GM10248 (cell line): ENCODE measurements at regions of chr1 and their contacts with region 1.

Region 1: GRCh38 chr1:39238476-39238875 is 34.0 kb downstream of the MACF1 start:
- DNase-seq: no peak
- CTCF ChIP-seq: no peak

Region 2: GRCh38 chr1:39190096-39190495 is 48.4 kb before region 1 on chr1:
- CTCF ChIA-PET with region 1: interaction called, 27 read pairs
- POLR2A ChIA-PET with region 1: no interaction called
- DNase-seq: no peak
- CTCF ChIP-seq: no peak

Region 3: DNA sequence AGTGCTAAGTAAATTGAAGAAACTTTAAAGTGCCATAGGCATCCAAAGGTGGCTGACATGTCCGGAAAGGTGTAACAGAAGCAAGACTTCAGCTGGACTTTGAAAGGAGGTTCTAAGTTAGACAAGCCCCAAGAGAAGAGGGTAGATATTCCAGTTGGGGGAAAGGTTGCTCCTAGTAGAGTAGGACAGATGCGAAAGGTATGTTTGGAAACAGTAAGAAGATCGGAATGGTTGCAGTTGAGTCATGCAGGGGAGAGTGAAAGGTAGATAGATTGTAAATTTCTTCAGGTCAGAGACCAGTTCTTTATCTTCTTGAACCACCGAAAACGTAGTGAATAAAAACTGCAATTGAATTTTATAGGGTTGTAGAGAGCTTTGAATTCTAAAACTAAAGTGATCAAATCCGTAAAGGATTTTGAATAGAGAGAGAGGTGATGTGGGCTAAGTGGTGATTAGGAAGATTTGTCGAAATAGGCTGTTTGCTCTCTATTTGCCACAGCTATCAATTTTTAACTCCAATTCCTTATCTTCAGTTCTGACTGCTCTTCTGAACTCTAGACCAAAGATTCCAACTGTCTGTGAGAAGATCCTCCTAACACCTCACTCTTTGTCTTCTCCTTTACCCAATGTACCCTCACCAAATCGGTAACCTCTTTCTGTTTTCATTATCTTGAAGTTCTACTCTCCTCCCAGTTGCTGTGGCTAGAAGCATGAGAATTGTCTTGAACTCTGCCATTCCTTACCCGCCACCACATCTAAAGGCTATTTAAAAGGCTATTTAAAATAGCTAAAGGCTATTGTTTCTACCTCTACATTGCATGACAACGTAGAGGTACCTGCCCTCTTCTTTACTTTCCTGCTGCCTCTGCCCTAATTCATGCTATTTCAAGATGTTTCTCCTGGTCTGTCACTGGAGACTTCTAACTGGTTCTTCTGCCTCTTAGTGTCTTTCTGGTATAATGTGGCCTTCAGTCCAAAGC is 17.3 kb before region 1 on chr1:
- CTCF ChIA-PET with region 1: interaction called, 11 read pairs
- POLR2A ChIA-PET with region 1: no interaction called
- DNase-seq: no peak
- CTCF ChIP-seq: no peak